AG04450 (cell line): ENCODE measurements at regions of chr3 and their contacts with region 1.

Region 1: GRCh38 chr3:112734718-112735350 is 93.9 kb upstream of the CCDC80 start:
- DNase-seq: peak; percentile 46
- H3K4me3 ChIP-seq: no peak overlapping the region
- H3K27ac ChIP-seq: no peak overlapping the region
- H3K27me3 ChIP-seq: no peaks in the 10 kb centered on the region
- CTCF ChIP-seq: peak; percentile 70

Region 2: DNA sequence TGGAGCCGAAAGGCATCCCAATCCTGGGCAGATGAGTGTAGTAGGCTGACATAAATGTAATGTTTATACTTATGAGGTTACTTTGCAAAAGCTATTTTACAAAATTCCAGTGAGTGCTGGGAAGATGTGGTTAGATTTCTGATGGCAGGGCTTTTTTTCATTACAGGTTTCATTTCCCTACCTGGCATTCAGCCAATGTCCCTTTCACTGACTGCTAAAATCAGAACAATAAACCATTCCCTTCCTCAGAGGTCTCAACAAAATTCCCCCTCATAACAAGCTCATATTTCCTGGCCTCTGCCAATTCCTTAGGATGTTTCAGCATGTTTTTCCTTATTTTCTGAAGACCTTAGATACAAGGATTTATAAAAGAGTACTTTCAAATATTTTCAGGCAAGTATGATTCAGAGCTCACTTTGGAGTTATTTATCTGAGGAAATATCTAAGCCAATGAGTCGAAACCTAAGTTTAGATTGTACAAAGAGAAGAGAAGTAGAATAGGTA is 53.0 kb before region 1 on chr3:
- CTCF ChIA-PET with region 1: interaction called, 10 read pairs
- POLR2A ChIA-PET with region 1: no interaction called
- DNase-seq: peak; percentile 48
- H3K4me3 ChIP-seq: no peak overlapping the region
- H3K27ac ChIP-seq: peak overlapping the region; percentile 80
- H3K27me3 ChIP-seq: no peaks in the 10 kb centered on the region
- CTCF ChIP-seq: no peak

Region 3: DNA sequence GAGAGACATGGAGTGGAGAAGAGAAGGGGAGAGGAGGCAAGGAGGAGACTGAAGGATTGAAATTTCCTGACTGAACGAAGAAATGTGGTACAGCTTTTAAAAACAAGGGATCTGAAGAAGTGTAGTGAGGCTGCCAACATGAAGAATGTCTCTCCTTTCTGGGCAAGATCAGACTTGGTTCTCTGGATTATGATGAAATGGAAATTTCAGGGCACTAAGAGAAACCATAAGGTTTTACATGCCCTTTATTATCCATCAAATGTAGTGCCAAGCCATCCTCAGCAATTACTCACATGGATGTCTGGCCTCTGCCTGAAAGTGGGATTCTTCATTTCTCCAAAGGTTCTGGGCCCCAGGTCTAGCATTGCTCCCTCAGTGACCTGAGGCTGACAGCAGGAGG is 16.3 kb before region 1 on chr3:
- CTCF ChIA-PET with region 1: interaction called, 12 read pairs
- POLR2A ChIA-PET with region 1: no interaction called
- DNase-seq: no peak
- H3K4me3 ChIP-seq: no peak overlapping the region
- H3K27ac ChIP-seq: no peak overlapping the region
- H3K27me3 ChIP-seq: no peaks in the 10 kb centered on the region
- CTCF ChIP-seq: no peak

Region 4: DNA sequence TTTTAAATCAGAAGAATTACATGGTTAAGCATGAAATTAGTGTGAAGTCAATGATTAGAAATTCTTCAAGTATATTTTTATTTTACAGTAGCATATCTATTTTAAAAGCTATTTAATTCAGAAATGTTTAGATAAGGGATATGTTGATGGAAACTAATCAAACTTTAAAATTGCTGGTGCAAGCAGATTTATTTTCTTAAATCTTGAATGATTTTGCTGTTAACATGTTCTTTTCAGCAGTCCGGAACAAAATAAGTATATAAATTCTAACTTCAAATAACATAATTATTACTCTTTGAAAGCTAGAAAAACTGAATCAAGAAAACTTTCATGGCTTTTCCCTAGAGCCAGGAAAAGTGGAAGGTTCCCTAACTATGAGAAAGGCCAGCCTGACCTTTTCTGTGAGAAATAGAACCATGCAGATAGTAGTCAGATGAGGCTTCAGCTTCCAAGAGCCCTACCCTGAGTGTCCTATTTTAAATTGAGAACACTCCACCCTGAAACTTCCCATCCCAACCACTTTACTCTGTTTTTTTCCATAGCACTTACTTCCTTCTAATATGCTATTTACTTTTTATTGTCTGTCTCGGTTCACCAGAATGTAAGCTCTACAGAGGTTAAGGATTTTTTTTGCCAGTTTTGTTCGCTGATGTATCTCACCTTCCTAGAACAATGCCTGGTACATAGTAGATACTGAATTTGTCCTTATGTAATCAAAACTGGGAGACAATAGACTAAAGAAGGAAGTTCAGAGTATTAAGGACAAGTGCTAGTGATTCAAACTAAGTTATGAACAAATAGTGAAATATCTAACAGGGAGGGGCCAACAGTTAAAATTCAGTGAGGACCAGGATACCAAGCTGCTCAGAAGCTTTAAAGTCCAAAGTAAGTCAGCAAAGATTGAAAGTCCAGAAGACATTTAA is 45.0 kb after region 1 on chr3:
- CTCF ChIA-PET with region 1: interaction called, 13 read pairs
- POLR2A ChIA-PET with region 1: no interaction called
- DNase-seq: no peak
- H3K4me3 ChIP-seq: no peak overlapping the region
- H3K27ac ChIP-seq: no peak overlapping the region
- H3K27me3 ChIP-seq: no peaks in the 10 kb centered on the region
- CTCF ChIP-seq: no peak

Region 5: GRCh38 chr3:112814266-112814665 is 79.4 kb after region 1 on chr3:
- CTCF ChIA-PET with region 1: interaction called, 55 read pairs
- POLR2A ChIA-PET with region 1: interaction called, 6 read pairs
- DNase-seq: peak; percentile 60
- H3K4me3 ChIP-seq: no peak overlapping the region
- H3K27ac ChIP-seq: no peak overlapping the region
- H3K27me3 ChIP-seq: no peaks in the 10 kb centered on the region
- CTCF ChIP-seq: peak; percentile 77

Region 6: GRCh38 chr3:112979240-112979832 is 244.5 kb after region 1 on chr3:
- CTCF ChIA-PET with region 1: interaction called, 57 read pairs
- POLR2A ChIA-PET with region 1: no interaction called
- DNase-seq: peak; percentile 11
- H3K4me3 ChIP-seq: no peak overlapping the region
- H3K27ac ChIP-seq: no peak overlapping the region
- H3K27me3 ChIP-seq: no peaks in the 10 kb centered on the region
- CTCF ChIP-seq: peak; percentile 69